Activated CD8-positive, alpha-beta memory T cell treated with anti-CD3 and anti-CD28 coated beads, Interleukin-2, amount 10 ng/mL, durations not matched to agents 7 days and 5 days (primary cell): ENCODE measurements at regions of chr16 and their contacts with region 1.

Region 1: GRCh38 chr16:75622761-75623605 is at the start of gene ADAT1:
- DNase-seq: peak; percentile 99
- ATAC-seq: peak; percentile 90
- H3K4me3 Mint-ChIP-seq: peak within 1 kb of the TSS; percentile 90
- H3K27ac Mint-ChIP-seq: peak within 1 kb of the TSS; percentile 97
- H3K4me1 Mint-ChIP-seq: peaks cover 46% of the 10 kb centered on the region
- H3K27me3 Mint-ChIP-seq: no peaks in the 10 kb centered on the region
- total RNA-seq, gene ADAT1: 48.3 to 57.2 TPM

Region 2: DNA sequence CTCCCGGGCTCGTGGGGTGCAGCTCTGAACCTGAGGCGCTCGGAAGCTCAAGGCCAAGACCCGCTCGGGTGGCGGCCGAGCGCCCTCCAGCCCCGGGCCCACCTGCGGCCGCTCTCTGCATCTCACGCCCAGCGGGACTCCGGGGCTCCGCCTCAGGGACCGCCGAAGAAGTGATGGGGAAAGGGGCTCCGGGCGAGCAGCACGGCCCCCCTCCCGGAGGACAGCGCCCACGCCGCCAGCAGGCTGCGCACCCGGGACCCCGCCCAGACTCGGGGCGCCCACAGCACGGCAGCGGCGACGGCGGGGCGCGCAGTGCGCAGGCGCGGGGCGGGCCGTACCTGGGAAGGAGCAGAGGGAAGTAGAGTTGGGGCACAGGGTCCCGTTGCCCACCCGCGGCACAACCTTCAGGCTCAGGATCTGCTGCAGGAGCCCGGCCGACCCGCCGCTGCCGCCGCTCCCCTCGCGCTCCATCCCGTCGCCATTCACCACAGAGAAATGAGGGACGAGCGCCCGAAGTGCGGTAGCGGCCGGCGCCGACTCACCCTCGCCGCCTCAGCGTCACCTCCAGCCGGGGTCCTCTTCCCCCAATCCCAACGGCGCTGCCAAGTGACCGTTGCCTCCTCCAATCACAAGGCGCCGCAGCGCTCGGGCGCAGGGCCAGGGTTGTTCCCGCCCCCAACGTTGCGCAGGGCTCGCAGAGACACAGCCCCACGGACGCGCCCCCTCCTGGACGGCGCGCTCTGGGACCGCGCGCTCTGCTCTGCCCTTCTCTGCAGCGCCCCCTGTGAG is 158.7 kb before region 1 on chr16 and contains the start of gene TMEM170A:
- CTCF ChIA-PET with region 1: interaction called, 17 read pairs
- DNase-seq: peak; percentile 99
- ATAC-seq: peak; percentile 96
- H3K4me3 Mint-ChIP-seq: peak within 1 kb of the TSS; percentile 90
- H3K27ac Mint-ChIP-seq: peak within 1 kb of the TSS; percentile 86
- H3K4me1 Mint-ChIP-seq: peaks cover 46% of the 10 kb centered on the region
- H3K27me3 Mint-ChIP-seq: no peaks in the 10 kb centered on the region
- total RNA-seq, gene TMEM170A: 31.1 to 33.7 TPM

Region 3: DNA sequence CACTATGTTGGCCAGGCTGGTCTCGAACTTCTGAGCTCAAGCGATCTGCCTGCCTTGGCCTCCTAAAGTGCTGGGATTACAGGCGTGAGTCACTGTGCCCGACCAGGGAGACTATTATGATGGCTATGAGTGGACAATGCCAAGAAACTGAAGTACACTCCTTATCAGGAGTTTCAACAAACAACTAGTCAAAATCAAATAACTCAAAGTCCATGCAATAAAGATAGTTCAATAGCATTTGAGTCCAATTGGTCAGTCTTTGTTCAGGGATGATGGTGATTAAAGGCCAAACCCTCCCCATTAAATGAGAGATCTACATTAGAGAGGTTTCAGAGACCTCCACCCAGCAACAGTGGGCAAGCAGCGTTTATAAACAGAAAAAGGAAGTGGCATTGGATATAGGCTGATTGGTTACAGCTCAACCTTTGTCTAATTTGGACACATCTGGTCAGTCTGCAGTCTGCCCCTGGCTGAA is 95.1 kb before region 1 on chr16:
- CTCF ChIA-PET with region 1: interaction called, 10 read pairs
- DNase-seq: no peak
- ATAC-seq: no peak
- H3K4me3 Mint-ChIP-seq: no peak overlapping the region
- H3K27ac Mint-ChIP-seq: no peak overlapping the region
- H3K4me1 Mint-ChIP-seq: no peaks in the 10 kb centered on the region
- H3K27me3 Mint-ChIP-seq: no peaks in the 10 kb centered on the region

Region 4: DNA sequence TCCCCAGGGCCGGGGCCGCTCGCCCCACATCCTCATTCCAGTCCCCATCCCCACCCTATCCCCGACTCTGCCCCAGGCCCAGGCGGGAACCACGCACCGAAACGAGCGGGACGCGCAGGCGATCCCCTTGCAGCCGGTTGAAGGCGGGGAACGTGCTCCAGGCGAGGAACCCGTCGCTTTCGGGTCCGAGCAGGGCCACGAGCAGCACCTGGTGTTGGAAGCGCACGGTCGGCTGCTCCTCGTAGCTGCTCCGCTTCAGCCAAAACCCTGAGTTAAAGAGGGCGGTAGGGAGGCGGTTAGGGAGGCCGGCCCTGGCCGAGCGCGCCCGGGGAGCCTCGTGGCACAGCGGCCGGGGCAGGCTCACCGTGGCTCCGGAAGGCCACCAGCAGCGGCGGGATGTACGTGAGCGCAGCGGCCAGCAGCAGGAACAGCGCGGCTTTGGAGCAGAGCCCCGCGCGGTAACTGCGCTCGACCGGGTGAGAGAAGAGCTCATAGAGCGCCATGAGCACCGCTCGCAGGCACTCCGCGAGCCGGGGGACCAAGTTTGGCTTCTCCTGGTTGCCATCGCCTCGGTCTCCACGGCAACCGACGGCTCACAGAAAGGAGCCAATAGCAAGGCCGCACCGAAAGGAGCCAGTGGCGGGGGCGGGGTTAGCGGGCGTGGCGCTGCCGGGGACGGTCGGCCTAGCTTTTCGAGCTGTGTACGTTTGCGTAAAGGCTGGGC is 67.1 kb before region 1 on chr16 and contains the start of gene TMEM231:
- CTCF ChIA-PET with region 1: interaction called, 13 read pairs
- DNase-seq: peak; percentile 98
- ATAC-seq: peak; percentile 97
- H3K4me3 Mint-ChIP-seq: peak within 1 kb of the TSS; percentile 83
- H3K27ac Mint-ChIP-seq: peak within 1 kb of the TSS; percentile 62
- H3K4me1 Mint-ChIP-seq: peaks cover 13% of the 10 kb centered on the region
- H3K27me3 Mint-ChIP-seq: peaks cover 13% of the 10 kb centered on the region
- total RNA-seq, gene TMEM231: 2.9 to 3.2 TPM

Region 5: DNA sequence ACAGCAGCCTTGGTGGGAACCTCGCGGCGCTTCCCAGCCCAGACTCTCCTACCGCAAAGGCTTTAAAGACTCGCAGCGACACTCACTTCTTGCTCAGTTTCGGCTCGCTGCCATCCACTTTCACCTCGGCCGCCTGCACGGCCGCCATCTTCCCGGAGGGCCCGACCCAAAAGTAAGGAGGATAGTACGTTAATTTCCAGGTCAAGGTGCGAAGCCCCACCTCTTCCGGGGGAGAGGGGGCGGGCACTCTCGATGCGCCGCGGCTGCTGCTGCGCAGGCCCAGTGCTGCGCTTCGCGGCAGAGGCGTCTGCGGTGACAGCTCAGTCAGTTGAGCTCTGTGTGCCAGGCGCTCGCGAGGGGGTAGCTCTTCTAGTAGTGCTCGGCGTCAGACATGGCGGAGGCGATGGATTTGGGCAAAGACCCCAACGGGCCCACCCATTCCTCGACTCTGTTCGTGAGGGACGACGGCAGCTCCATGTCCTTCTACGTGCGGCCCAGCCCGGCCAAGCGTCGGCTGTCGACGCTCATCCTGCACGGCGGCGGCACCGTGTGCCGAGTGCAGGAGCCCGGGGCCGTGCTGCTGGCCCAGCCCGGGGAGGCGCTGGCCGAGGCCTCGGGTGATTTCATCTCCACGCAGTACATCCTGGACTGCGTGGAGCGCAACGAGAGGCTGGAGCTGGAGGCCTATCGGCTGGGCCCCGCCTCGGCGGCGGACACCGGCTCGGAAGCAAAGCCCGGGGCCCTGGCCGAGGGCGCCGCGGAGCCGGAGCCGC is 24.7 kb after region 1 on chr16 and contains the starts of genes KARS1 and TERF2IP:
- CTCF ChIA-PET with region 1: interaction called, 63 read pairs
- DNase-seq: peak; percentile 97
- ATAC-seq: peak; percentile 90
- H3K4me3 Mint-ChIP-seq: peak within 1 kb of the TSS; percentile 81
- H3K27ac Mint-ChIP-seq: peak within 1 kb of the TSS; percentile 98
- H3K4me1 Mint-ChIP-seq: peaks cover 55% of the 10 kb centered on the region
- H3K27me3 Mint-ChIP-seq: no peaks in the 10 kb centered on the region
- total RNA-seq, gene KARS1: 182 to 220 TPM
- total RNA-seq, gene TERF2IP: 71.1 to 91.4 TPM